ENCODE measurements at regions of chr14 and their contacts with region 1.

Region 1: DNA sequence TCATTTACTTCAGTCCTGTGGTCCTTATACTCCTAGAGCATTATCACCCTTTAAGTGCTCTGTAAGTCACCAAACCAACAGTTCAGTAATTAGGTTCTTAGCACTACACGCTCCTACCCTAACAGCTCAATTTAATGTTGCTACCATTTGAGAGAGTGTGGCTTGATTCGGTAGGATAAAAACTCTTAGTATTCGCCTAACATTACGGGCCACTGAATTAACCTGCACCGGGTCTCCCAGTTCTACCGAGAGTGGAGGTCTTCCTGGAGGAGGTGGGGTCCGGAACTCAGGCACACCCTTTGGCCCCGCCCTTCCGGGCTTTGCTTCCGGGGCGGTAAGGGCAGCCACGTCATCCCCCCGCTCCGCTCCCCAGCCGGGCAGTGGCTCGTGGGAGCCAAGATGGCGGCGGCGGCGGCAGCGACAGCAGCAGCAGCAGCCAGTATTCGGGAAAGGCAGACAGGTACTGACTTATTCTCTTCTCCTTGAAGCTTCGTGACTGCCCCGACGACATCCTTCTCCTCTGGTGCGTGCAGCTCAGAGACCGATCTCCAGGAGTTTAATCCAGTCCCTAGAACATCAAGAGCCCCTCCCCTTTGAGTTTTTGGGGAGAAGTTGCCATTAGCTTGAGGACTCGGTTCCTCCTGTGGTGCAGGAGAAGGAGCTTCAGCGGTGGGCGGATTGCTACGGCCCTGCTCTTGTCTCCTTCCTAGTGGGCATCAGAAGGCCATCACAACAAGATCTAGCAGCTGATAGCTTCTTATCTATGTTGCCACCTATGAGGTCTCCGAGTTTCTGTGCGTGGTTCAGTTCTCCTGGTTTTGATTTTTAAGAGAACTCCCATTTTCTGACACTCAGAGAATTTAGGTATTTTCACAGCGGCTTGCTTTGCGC is at the start of gene SCFD1:
- DNase-seq: peak; percentile 75 to 90
- ATAC-seq: peak; percentile 95 to 98
- H3K4me3 ChIP-seq: peak within 1 kb of the TSS; percentile 73
- H3K27ac ChIP-seq: peak within 1 kb of the TSS; percentile 94 to 96
- H3K4me1 ChIP-seq: peaks cover 26% of the 10 kb centered on the region; the same call in 2 of the 3 replicates
- CTCF ChIP-seq: no peak
- EP300 ChIP-seq: no peak
- POLR2A ChIP-seq: peak; percentile 95
- RAD21 ChIP-seq: no peak
- polyA plus RNA-seq, gene SCFD1: 107 and 158 TPM in 2 replicates

Region 2: GRCh38 chr14:30558675-30559555 is 63.3 kb before region 1 on chr14 and contains the start of gene G2E3:
- CTCF ChIA-PET with region 1: interaction called, 12 read pairs
- POLR2A ChIA-PET with region 1: interaction called, 4 read pairs
- DNase-seq: peak; percentile 78 to 89
- ATAC-seq: peak; percentile 99
- H3K4me3 ChIP-seq: peak within 1 kb of the TSS; percentile 75
- H3K27ac ChIP-seq: peak within 1 kb of the TSS; percentile 87 to 93
- H3K4me1 ChIP-seq: peaks cover 26% of the 10 kb centered on the region
- CTCF ChIP-seq: no peak
- EP300 ChIP-seq: no peak
- POLR2A ChIP-seq: peak; percentile 82
- RAD21 ChIP-seq: no peak
- polyA plus RNA-seq, gene G2E3: 20.5 and 27.9 TPM in 2 replicates

Region 3: DNA sequence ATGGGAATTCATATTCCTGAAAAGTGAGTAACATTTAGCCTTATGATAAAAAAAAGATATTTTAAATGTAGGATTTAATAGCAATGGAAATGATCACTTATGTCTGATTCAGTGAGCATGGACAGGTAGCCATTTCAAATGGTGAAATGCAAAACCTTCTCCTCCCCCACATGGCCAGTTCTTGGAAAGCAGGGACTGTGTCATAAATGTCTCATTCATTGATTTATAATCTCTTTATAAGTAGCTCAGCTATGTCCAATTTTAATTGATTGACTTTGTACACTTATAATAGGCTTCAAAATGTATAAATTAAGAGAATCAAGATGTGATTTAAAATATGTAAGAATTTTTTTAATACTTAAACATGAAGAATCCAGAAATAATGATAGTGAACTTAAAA is 24.7 kb before region 1 on chr14:
- CTCF ChIA-PET with region 1: no interaction called
- POLR2A ChIA-PET with region 1: no interaction called
- DNase-seq: no peak
- ATAC-seq: no peak
- H3K4me3 ChIP-seq: no peak overlapping the region
- H3K27ac ChIP-seq: no peak overlapping the region
- H3K4me1 ChIP-seq: 0 out of 3 replicates have a peak, but pooled peaks cover 4% of the 10 kb centered on the region
- CTCF ChIP-seq: no peak
- EP300 ChIP-seq: no peak
- POLR2A ChIP-seq: no peak
- RAD21 ChIP-seq: no peak

Region 4: GRCh38 chr14:30610787-30611343 is 11.3 kb before region 1 on chr14:
- CTCF ChIA-PET with region 1: interaction called, 24 read pairs
- POLR2A ChIA-PET with region 1: interaction called, 3 read pairs
- DNase-seq: peak; percentile 13 to 60
- ATAC-seq: peak; percentile 70 to 80; a peak in 4 of 6 replicates
- H3K4me3 ChIP-seq: no peak overlapping the region
- H3K27ac ChIP-seq: no peak overlapping the region
- H3K4me1 ChIP-seq: peaks cover 25% of the 10 kb centered on the region
- CTCF ChIP-seq: peak; percentile 23; the same call in 2 of the 3 replicates
- EP300 ChIP-seq: no peak
- POLR2A ChIP-seq: no peak
- RAD21 ChIP-seq: 0 out of 5 replicates have a peak, but pooled peaks have one; percentile 24 to 29

Region 5: DNA sequence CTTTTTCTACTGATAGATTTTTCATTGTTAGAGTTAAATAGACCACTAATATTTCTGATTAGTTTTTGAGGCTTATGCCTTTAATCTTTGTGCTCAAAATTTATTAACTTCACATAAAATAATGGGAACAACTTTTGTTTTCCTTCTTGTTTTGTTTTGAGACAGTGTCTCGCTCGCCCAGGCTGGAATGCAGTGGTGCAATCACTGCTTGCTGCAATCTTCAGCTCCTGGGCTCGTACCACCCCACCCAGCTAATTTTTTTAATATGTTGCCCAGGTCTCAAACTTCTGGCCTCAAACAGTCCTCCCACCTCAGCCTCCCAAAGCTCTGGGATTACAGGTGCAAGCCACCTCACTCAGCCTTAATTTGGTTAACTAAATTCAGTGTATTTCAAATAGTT is 16.7 kb after region 1 on chr14:
- CTCF ChIA-PET with region 1: no interaction called
- POLR2A ChIA-PET with region 1: no interaction called
- DNase-seq: no peak
- ATAC-seq: no peak
- H3K4me3 ChIP-seq: no peak overlapping the region
- H3K27ac ChIP-seq: no peak overlapping the region
- H3K4me1 ChIP-seq: peaks cover 7% of the 10 kb centered on the region
- CTCF ChIP-seq: no peak
- EP300 ChIP-seq: no peak
- POLR2A ChIP-seq: no peak
- RAD21 ChIP-seq: no peak